ENCODE measurements at regions of chr10 and their contacts with region 1.

Region 1: GRCh38 chr10:119502209-119502608 is 40.3 kb downstream of the RGS10 start:
- DNase-seq: peak; percentile 71
- H3K4me3 Mint-ChIP-seq: peak overlapping the region; percentile 70
- H3K27ac Mint-ChIP-seq: peak overlapping the region; percentile 94
- H3K4me1 Mint-ChIP-seq: peaks cover 90% of the 10 kb centered on the region
- H3K27me3 Mint-ChIP-seq: no peaks in the 10 kb centered on the region

Region 2: GRCh38 chr10:119090968-119091367 is 411.2 kb before region 1 on chr10:
- intact Hi-C with region 1: no loop called
- DNase-seq: peak; percentile 20
- H3K4me3 Mint-ChIP-seq: peak overlapping the region; percentile 4
- H3K27ac Mint-ChIP-seq: no peak overlapping the region
- H3K4me1 Mint-ChIP-seq: peaks cover 39% of the 10 kb centered on the region
- H3K27me3 Mint-ChIP-seq: no peaks in the 10 kb centered on the region

Region 3: DNA sequence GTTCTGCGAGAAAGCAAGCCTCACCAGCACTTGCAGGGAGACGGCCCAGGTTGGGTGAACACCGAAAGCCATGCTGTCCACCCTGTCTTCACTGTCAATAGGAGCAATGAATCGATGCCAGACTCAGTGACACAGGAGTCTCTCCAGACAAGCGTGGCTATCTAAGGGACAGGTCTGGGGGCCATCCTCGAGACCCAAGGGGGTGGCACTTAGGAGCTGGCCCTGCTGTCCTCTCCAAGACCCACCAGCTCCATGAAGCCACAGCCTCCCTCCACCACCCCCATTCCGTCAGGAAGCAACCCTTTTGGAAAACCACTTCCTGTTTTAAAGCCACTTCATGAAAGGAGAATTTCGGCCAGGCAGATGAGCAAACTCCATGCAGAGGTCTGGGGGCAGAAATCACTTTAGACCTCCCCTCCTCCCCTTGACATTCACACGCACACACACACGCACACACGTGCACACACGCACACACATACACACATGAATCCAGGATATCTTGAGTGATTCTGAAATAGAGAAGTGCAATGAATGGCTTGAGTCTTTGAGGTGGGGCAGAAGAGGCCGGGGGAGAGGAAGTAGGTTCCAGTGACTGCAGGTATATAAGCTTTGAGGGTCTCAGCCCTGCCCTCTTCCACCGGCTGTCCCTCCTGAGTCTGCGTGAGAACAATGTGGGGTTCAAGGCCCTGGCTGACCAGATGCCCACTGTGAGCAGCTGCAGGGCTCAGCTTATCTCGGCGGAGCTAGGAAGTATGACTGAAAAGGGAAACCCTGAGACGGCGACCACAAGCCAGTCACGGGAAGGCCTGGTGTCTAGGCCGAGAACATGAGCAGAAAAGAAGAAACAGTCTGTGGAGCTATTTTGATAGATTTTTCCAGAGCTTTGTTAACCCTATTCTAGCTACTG is 15.3 kb after region 1 on chr10:
- intact Hi-C with region 1: loop called (anchors 1 kb)
- DNase-seq: peak; percentile 55
- H3K4me3 Mint-ChIP-seq: peak overlapping the region; percentile 54
- H3K27ac Mint-ChIP-seq: peak overlapping the region; percentile 82
- H3K4me1 Mint-ChIP-seq: peaks cover 53% of the 10 kb centered on the region
- H3K27me3 Mint-ChIP-seq: no peaks in the 10 kb centered on the region

Region 4: DNA sequence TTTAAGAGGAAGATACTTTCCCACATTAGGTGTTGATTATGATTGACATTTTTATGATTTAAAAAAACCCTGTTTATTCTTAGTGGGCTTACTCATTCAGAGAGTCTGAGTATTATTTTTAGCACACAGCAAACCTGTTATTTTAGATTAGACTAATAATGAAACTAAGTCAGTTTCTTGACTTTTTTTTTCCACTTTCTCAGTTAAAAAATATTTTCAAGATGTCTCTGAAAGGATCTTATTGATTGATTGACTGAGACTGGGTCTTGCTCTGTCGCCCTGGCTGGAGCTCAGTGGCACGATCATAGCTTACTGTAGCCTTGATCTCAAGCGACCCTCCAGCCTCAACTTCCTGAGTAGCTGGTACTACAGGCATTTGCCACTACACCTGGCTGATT is 203.2 kb after region 1 on chr10:
- intact Hi-C with region 1: loop called (anchors 5 kb)
- DNase-seq: no peak
- H3K4me3 Mint-ChIP-seq: peak overlapping the region; percentile 74
- H3K27ac Mint-ChIP-seq: peak overlapping the region; percentile 99
- H3K4me1 Mint-ChIP-seq: peaks cover 82% of the 10 kb centered on the region
- H3K27me3 Mint-ChIP-seq: peaks cover 2% of the 10 kb centered on the region

Region 5: DNA sequence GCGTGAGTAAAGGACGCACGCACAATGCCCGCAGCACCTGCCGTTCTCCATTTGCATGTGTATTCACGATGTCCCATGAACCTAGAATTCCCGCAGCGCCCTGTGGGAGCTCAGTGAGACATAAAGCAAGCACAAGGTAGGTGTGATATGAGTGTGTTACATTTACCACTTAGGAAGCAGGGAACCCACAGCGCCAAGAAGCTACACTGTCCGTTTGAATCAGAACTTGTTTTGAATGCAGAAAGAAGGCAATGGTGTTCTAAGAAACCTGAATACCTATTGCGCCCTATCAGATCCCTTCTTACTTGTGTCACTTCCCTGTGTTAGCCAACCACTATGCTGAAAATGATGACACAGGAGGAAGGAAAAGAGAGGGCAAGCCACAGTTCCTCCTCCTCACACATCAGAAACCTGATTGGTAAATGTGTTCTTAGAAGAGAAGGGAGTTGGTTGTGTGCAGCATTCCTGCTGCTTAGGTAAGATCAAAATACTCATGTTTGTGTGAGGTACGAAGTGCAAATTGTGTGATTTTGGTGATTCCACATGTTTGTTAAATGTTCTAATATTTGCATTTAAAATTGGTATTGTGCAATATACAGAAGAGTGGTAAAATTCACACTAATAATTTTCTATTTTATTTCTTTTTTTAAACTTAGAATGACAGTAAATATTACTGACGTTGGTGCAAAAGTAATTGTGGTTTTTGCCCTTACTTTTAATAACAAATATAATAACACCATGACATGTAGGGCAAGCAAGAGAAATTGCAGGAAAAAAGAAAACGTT is 575.7 kb after region 1 on chr10:
- intact Hi-C with region 1: no loop called
- DNase-seq: no peak
- H3K4me3 Mint-ChIP-seq: no peak overlapping the region
- H3K27ac Mint-ChIP-seq: no peak overlapping the region
- H3K4me1 Mint-ChIP-seq: no peaks in the 10 kb centered on the region
- H3K27me3 Mint-ChIP-seq: peaks cover 2% of the 10 kb centered on the region